Activated CD4-positive, alpha-beta T cell treated with anti-CD3 and anti-CD28 coated beads, Interleukin-2, amount 10 ng/mL, durations not matched to agents 24 days and 14 days (primary cell): ENCODE measurements at regions of chr6 and their contacts with region 1.

Region 1: GRCh38 chr6:170295510-170296422 is 4.9 kb upstream of the DLL1 start:
- DNase-seq: peak; percentile 77
- H3K4me3 Mint-ChIP-seq: peak overlapping the region; percentile 81
- H3K27ac Mint-ChIP-seq: peak overlapping the region; percentile 41
- H3K4me1 Mint-ChIP-seq: peaks cover 21% of the 10 kb centered on the region
- H3K27me3 Mint-ChIP-seq: peaks cover 73% of the 10 kb centered on the region

Region 2: GRCh38 chr6:169789982-169790927 is 505.5 kb before region 1 on chr6:
- intact Hi-C with region 1: loop called (anchors 1 kb)
- DNase-seq: peak; percentile 91
- H3K4me3 Mint-ChIP-seq: peak overlapping the region; percentile 88
- H3K27ac Mint-ChIP-seq: peak overlapping the region; percentile 53
- H3K4me1 Mint-ChIP-seq: peaks cover 15% of the 10 kb centered on the region
- H3K27me3 Mint-ChIP-seq: peaks cover 35% of the 10 kb centered on the region

Region 3: GRCh38 chr6:169831450-169832246 is 464.1 kb before region 1 on chr6:
- intact Hi-C with region 1: loop called (anchors 2 kb)
- DNase-seq: peak; percentile 91
- H3K4me3 Mint-ChIP-seq: no peak overlapping the region
- H3K27ac Mint-ChIP-seq: no peak overlapping the region
- H3K4me1 Mint-ChIP-seq: no peaks in the 10 kb centered on the region
- H3K27me3 Mint-ChIP-seq: peaks cover 39% of the 10 kb centered on the region

Region 4: GRCh38 chr6:170147832-170148708 is 147.7 kb before region 1 on chr6:
- intact Hi-C with region 1: loop called (anchors 10 kb)
- DNase-seq: peak; percentile 78
- H3K4me3 Mint-ChIP-seq: peak overlapping the region; percentile 66
- H3K27ac Mint-ChIP-seq: peak overlapping the region; percentile 86
- H3K4me1 Mint-ChIP-seq: peaks cover 20% of the 10 kb centered on the region
- H3K27me3 Mint-ChIP-seq: peaks cover 22% of the 10 kb centered on the region

Region 5: GRCh38 chr6:170247178-170247701 is 48.5 kb before region 1 on chr6:
- intact Hi-C with region 1: no loop called
- DNase-seq: no peak
- H3K4me3 Mint-ChIP-seq: no peak overlapping the region
- H3K27ac Mint-ChIP-seq: no peak overlapping the region
- H3K4me1 Mint-ChIP-seq: no peaks in the 10 kb centered on the region
- H3K27me3 Mint-ChIP-seq: peaks cover 2% of the 10 kb centered on the region